Posterior cingulate gyrus (tissue), 11 donors: ENCODE measurements at regions of chr2 and their contacts with region 1.

Region 1: GRCh38 chr2:32168513-32168912 is 2.8 kb downstream of the SLC30A6 start:
- DNase-seq: no peak

Region 2: GRCh38 chr2:32039447-32040219 is 128.9 kb before region 1 on chr2 and contains the start of gene DPY30:
- intact Hi-C with region 1: loop called (anchors 10 kb)
- DNase-seq: peak; percentile 88 to 99 (median 92)

Region 3: DNA sequence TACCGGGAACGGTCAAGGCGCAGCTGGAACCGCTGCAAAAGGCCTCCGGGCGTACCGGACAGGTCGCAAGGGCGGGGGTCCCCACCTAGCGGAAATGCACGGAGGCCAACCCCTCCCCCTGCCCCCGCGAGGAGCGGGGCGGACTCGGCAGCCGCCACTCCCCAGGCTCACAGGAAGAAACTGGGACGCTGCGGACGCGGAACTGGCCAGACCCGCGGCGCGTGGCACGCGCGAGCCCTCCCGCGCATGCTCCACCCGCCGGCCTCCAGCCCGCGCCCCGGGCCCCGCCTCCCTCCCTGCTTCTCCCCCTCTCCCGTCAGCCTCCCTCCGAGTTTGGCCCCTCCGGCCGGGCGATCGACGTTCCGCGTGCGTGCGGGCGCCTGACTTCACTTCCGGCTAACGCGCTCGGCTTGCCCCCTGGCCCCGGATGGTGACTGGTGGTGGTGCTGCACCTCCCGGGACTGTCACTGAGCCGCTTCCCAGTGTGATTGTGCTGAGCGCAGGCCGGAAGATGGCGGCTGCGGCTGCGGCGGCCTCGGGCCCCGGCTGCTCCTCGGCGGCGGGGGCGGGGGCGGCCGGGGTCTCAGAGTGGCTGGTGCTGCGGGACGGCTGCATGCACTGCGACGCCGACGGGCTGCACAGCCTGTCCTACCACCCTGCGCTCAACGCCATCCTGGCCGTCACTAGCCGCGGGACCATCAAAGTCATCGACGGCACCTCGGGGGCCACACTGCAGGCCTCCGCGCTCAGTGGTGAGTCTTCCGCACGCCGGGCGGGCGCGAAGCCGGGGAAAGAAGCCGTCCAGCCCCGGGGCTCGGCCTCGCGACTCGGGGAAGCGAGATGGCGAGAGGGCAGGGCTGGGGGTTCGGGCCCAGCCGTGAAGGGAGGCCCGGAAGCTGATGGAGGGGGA is 188.5 kb after region 1 on chr2 and contains the start of gene BIRC6:
- intact Hi-C with region 1: loop called (anchors 5 kb)
- DNase-seq: peak; percentile 99 to 100 (median 99)